CD4-positive, alpha-beta memory T cell (primary cell): ENCODE measurements at regions of chr19 and their contacts with region 1.

Region 1: GRCh38 chr19:54390942-54391577 is 24.2 kb upstream of the TTYH1 start:
- DNase-seq: peak; percentile 68 to 69 (median 69)
- H3K4me3 ChIP-seq: no peak overlapping the region
- H3K4me3 Mint-ChIP-seq: peak overlapping the region; percentile 18 to 85 (median 70)
- H3K27ac ChIP-seq: no peak overlapping the region
- H3K27ac Mint-ChIP-seq: peak overlapping the region; percentile 64 to 94 (median 82)
- H3K4me1 ChIP-seq: peaks cover 38% of the 10 kb centered on the region
- H3K4me1 Mint-ChIP-seq: peaks cover 26 to 41% (median 33%) of the 10 kb centered on the region in 4 donors
- H3K27me3 ChIP-seq: no peaks in the 10 kb centered on the region
- H3K27me3 Mint-ChIP-seq: peaks cover 5 to 11% of the 10 kb centered on the region in 2 donors

Region 2: GRCh38 chr19:54325194-54325621 is 65.9 kb before region 1 on chr19:
- CTCF ChIA-PET with region 1: interaction called, 279 read pairs
- POLR2A ChIA-PET with region 1: interaction called, 9 read pairs
- intact Hi-C with region 1: loop called (anchors 1 kb)
- DNase-seq: peak; percentile 59 to 68 (median 64)
- H3K4me3 ChIP-seq: no peak overlapping the region
- H3K4me3 Mint-ChIP-seq: no peak overlapping the region
- H3K27ac ChIP-seq: no peak overlapping the region
- H3K27ac Mint-ChIP-seq: peak overlapping the region in 2 of 7 donors; percentile 0 to 58
- H3K4me1 ChIP-seq: peaks cover 8% of the 10 kb centered on the region
- H3K4me1 Mint-ChIP-seq: peaks cover 8 to 19% (median 14%) of the 10 kb centered on the region in 4 donors
- H3K27me3 ChIP-seq: no peaks in the 10 kb centered on the region
- H3K27me3 Mint-ChIP-seq: peaks cover 11 to 13% of the 10 kb centered on the region in 2 donors

Region 3: DNA sequence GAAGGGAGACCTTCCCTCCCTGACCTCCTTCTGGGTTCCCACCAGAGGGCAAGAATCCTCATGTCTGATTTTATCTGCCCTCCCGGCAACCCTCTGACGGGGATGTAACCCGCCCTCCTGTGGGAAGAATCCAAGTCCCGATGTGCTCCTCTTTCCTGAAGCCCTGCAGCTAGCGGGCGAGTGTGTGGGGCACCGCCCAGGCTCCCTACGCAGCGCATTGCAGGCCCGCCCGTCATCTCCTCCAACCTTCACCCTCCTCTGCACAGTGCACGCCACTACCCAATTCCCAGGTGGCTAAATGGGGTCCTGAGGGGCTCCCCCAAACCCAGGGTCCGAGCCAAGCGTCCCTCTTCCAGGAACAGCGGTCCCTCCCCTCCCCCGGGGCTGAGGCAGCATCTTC is 33.7 kb before region 1 on chr19:
- CTCF ChIA-PET with region 1: interaction called, 90 read pairs
- POLR2A ChIA-PET with region 1: interaction called, 15 read pairs
- intact Hi-C with region 1: no loop called
- DNase-seq: no peak
- H3K4me3 ChIP-seq: no peak overlapping the region
- H3K4me3 Mint-ChIP-seq: no peak overlapping the region
- H3K27ac ChIP-seq: no peak overlapping the region
- H3K27ac Mint-ChIP-seq: peak overlapping the region in 1 of 7 donors; percentile 10
- H3K4me1 ChIP-seq: peaks cover 20% of the 10 kb centered on the region
- H3K4me1 Mint-ChIP-seq: peaks cover 16 to 36% (median 23%) of the 10 kb centered on the region in 4 donors
- H3K27me3 ChIP-seq: no peaks in the 10 kb centered on the region
- H3K27me3 Mint-ChIP-seq: no peaks in the 10 kb centered on the region

Region 4: GRCh38 chr19:54373781-54374631 is 17.1 kb before region 1 on chr19:
- CTCF ChIA-PET with region 1: interaction called, 28 read pairs
- POLR2A ChIA-PET with region 1: interaction called, 74 read pairs
- intact Hi-C with region 1: loop called (anchors 1 kb)
- DNase-seq: peak in 1 of 5 donors; percentile 50
- H3K4me3 ChIP-seq: no peak overlapping the region
- H3K4me3 Mint-ChIP-seq: peak overlapping the region in 7 of 8 donors; percentile 32 to 91 (median 67)
- H3K27ac ChIP-seq: no peak overlapping the region
- H3K27ac Mint-ChIP-seq: peak overlapping the region in 2 of 7 donors; percentile 21 to 55
- H3K4me1 ChIP-seq: peaks cover 78% of the 10 kb centered on the region
- H3K4me1 Mint-ChIP-seq: peaks cover 56 to 85% (median 71%) of the 10 kb centered on the region in 4 donors
- H3K27me3 ChIP-seq: no peaks in the 10 kb centered on the region
- H3K27me3 Mint-ChIP-seq: no peaks in the 10 kb centered on the region

Region 5: GRCh38 chr19:54403054-54403453 is 12.0 kb after region 1 on chr19:
- CTCF ChIA-PET with region 1: interaction called, 11 read pairs
- POLR2A ChIA-PET with region 1: no interaction called
- intact Hi-C with region 1: no loop called
- DNase-seq: no peak
- H3K4me3 ChIP-seq: no peak overlapping the region
- H3K4me3 Mint-ChIP-seq: no peak overlapping the region
- H3K27ac ChIP-seq: no peak overlapping the region
- H3K27ac Mint-ChIP-seq: no peak overlapping the region
- H3K4me1 ChIP-seq: no peaks in the 10 kb centered on the region
- H3K4me1 Mint-ChIP-seq: peaks cover 0 to 5% (median 0%) of the 10 kb centered on the region in 4 donors
- H3K27me3 ChIP-seq: no peaks in the 10 kb centered on the region
- H3K27me3 Mint-ChIP-seq: peaks cover 6 to 7% of the 10 kb centered on the region in 2 donors

Region 6: GRCh38 chr19:54506079-54506478 is 115.0 kb after region 1 on chr19:
- CTCF ChIA-PET with region 1: no interaction called
- POLR2A ChIA-PET with region 1: no interaction called
- intact Hi-C with region 1: no loop called
- DNase-seq: no peak
- H3K4me3 ChIP-seq: no peak overlapping the region
- H3K4me3 Mint-ChIP-seq: peak overlapping the region in 6 of 8 donors; percentile 3 to 70 (median 20)
- H3K27ac ChIP-seq: no peak overlapping the region
- H3K27ac Mint-ChIP-seq: peak overlapping the region in 2 of 7 donors; percentile 13 to 46
- H3K4me1 ChIP-seq: peaks cover 25% of the 10 kb centered on the region
- H3K4me1 Mint-ChIP-seq: peaks cover 2 to 32% (median 13%) of the 10 kb centered on the region in 4 donors
- H3K27me3 ChIP-seq: no peaks in the 10 kb centered on the region
- H3K27me3 Mint-ChIP-seq: peaks cover 14 to 17% of the 10 kb centered on the region in 2 donors